Caco-2 (cell line): ENCODE measurements at regions of chr3 and their contacts with region 1.

Region 1: GRCh38 chr3:89314454-89315098 is 207.2 kb downstream of the EPHA3 start:
- DNase-seq: peak in 1 of 2 experiments; percentile 25
- H3K4me3 ChIP-seq: no peak overlapping the region
- H3K4me3 Mint-ChIP-seq: no peak overlapping the region
- H3K27ac Mint-ChIP-seq: no peak overlapping the region
- H3K4me1 ChIP-seq: no peaks in the 10 kb centered on the region
- H3K4me1 Mint-ChIP-seq: no peaks in the 10 kb centered on the region
- H3K27me3 ChIP-seq: no peaks in the 10 kb centered on the region
- H3K27me3 Mint-ChIP-seq: no peaks in the 10 kb centered on the region
- CTCF ChIP-seq: no peak

Region 2: GRCh38 chr3:89260721-89261120 is 53.9 kb before region 1 on chr3:
- CTCF ChIA-PET with region 1: no interaction called
- POLR2A ChIA-PET with region 1: no interaction called
- intact Hi-C with region 1: no loop called
- DNase-seq: no peak
- H3K4me3 ChIP-seq: no peak overlapping the region
- H3K4me3 Mint-ChIP-seq: no peak overlapping the region
- H3K27ac Mint-ChIP-seq: no peak overlapping the region
- H3K4me1 ChIP-seq: no peaks in the 10 kb centered on the region
- H3K4me1 Mint-ChIP-seq: no peaks in the 10 kb centered on the region
- H3K27me3 ChIP-seq: no peaks in the 10 kb centered on the region
- H3K27me3 Mint-ChIP-seq: peaks cover 2% of the 10 kb centered on the region
- CTCF ChIP-seq: no peak

Region 3: DNA sequence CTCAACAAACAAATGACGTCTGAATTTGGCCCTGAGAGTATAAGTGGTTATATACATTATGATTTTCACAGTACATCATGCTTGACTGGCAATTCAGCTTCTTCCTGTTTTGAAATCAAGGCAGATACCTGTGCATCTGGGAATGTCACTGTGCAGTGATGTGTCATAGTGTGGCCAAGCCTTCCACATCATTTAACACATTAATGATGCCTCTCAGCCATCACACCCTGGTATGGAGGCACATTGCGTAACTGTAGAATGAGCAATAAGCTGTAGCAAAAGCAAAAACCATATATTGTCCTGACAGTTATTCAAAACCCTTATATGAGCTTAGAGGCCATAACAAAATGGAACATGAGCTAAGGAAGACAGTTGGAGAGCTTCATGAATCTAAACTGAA is 38.9 kb after region 1 on chr3:
- CTCF ChIA-PET with region 1: no interaction called
- POLR2A ChIA-PET with region 1: no interaction called
- intact Hi-C with region 1: no loop called
- DNase-seq: no peak
- H3K4me3 ChIP-seq: no peak overlapping the region
- H3K4me3 Mint-ChIP-seq: no peak overlapping the region
- H3K27ac Mint-ChIP-seq: no peak overlapping the region
- H3K4me1 ChIP-seq: no peaks in the 10 kb centered on the region
- H3K4me1 Mint-ChIP-seq: no peaks in the 10 kb centered on the region
- H3K27me3 ChIP-seq: no peaks in the 10 kb centered on the region
- H3K27me3 Mint-ChIP-seq: no peaks in the 10 kb centered on the region
- CTCF ChIP-seq: no peak

Region 4: DNA sequence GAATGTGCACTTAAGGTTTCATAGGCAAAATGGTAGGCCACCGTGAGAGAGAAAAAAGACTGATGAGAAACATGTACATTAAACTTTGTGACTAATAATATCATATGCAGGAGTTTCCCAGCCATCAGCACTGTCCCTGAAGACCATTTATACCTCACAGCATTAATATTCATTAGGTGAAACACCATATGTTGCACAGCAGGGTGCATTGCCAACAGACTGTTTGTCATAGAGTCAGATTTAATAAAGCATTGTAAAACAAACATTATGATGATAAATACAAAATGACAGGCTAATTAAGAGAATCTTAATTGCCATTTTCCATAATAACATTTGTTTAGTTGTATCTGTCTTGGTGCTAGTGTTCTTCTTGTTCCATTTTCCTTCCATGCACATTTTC is 371.2 kb after region 1 on chr3:
- CTCF ChIA-PET with region 1: no interaction called
- POLR2A ChIA-PET with region 1: no interaction called
- intact Hi-C with region 1: loop called (anchors 10 kb)
- DNase-seq: no peak
- H3K4me3 ChIP-seq: no peak overlapping the region
- H3K4me3 Mint-ChIP-seq: no peak overlapping the region
- H3K27ac Mint-ChIP-seq: no peak overlapping the region
- H3K4me1 ChIP-seq: no peaks in the 10 kb centered on the region
- H3K4me1 Mint-ChIP-seq: no peaks in the 10 kb centered on the region
- H3K27me3 ChIP-seq: no peaks in the 10 kb centered on the region
- H3K27me3 Mint-ChIP-seq: no peaks in the 10 kb centered on the region
- CTCF ChIP-seq: no peak